Activated CD4-positive, alpha-beta T cell treated with anti-CD3 and anti-CD28 coated beads for 36 hours (primary cell): ENCODE measurements at regions of chr17 and their contacts with region 1.

Region 1: DNA sequence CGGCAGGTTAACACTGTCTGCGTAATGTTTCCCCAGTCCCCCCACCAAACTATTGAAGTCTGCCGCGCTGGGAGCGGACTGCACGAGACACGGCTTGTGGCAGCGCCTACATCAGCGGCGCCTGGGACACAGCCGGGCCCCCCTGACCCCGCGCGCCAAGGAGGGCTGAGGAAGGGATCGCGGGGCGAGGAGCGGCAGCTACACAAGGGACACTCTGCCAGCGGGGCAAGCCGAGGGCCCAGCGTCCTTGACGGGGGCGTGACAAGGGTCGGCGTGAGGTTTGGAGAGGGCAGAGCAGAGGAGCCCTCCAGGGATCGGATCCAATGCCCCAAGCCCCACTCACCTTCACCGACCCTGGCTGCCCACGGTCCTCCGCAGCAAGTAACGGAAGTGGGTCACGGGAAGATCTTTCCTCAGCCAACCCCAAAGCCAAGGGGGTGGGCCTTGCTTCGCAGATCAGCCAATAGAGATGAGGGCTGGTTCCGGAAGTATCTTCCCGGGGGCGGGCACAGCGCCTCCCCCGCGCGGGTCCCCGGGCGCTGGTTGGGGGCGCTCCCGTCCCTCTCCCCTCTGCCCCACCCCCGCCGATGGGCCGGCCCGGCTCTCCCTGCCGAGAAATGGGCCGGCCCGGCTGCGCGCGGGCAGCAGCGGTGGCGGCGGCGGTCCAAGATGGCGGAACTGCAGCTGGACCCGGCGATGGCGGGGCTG is at the starts of genes ATP5PD and KCTD2:
- DNase-seq: peak; percentile 97
- ATAC-seq: peak; percentile 95
- H3K4me3 Mint-ChIP-seq: peak within 1 kb of the TSS; percentile 99
- H3K27ac Mint-ChIP-seq: peak within 1 kb of the TSS; percentile 94
- H3K4me1 Mint-ChIP-seq: peaks cover 37% of the 10 kb centered on the region
- H3K27me3 Mint-ChIP-seq: no peaks in the 10 kb centered on the region
- total RNA-seq, gene ATP5PD: 194 to 237 TPM
- total RNA-seq, gene KCTD2: 15.3 to 16.7 TPM

Region 2: GRCh38 chr17:74513987-74514631 is 532.6 kb before region 1 on chr17:
- CTCF ChIA-PET with region 1: no interaction called
- POLR2A ChIA-PET with region 1: no interaction called
- intact Hi-C with region 1: no loop called
- DNase-seq: peak; percentile 78
- ATAC-seq: peak; percentile 17
- H3K4me3 Mint-ChIP-seq: peak overlapping the region; percentile 72
- H3K27ac Mint-ChIP-seq: peak overlapping the region; percentile 95
- H3K4me1 Mint-ChIP-seq: peaks cover 31% of the 10 kb centered on the region
- H3K27me3 Mint-ChIP-seq: peaks cover 14% of the 10 kb centered on the region

Region 3: DNA sequence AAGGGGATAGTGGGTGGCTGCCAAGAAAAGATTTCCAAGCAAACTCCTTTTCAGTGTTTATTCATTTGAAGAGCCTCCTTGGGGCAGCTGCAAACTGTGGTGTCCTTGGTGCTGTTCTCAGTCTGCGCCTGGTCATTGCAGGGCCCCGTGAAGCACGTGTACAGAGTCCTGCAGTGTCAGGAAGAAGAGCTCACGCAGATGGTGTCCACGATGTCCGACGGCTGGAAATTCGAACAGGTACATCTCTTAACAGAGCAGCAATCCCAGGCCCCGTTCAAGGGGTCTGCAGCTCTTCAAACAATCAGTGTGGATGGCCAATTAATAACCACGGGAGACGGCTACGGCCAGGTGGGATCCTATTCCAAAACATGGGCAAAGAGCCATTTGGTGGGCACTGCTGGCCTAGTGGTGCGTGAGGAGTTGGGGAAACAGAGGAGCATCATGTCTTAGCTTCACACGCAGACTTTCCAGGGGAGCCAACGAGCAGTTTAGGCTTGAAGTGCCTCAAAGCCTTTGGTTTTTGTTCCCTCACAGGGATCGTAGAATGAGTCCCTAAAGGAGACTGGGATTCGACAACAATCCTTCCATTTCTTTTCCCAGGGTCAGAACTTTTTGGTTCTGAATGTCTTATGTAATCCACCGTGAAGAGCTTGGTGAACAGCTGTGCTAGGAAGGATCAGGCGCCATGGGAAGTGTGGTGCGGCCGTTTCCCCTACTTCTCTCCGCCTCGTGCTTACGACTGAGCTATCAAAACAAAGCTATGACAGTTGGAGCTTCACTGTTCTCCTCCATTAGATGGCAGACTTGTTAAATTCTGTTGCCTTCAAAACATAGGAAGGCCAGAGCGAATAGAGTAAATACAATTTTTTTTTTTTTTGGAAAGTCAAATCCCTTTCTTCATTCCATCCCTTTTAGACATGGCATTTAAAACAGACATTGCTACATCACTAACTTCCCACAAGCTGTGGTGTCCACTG is 12.9 kb after region 1 on chr17:
- CTCF ChIA-PET with region 1: interaction called, 20 read pairs
- POLR2A ChIA-PET with region 1: interaction called, 3 read pairs
- intact Hi-C with region 1: no loop called
- DNase-seq: no peak
- ATAC-seq: peak; percentile 39
- H3K4me3 Mint-ChIP-seq: no peak overlapping the region
- H3K27ac Mint-ChIP-seq: no peak overlapping the region
- H3K4me1 Mint-ChIP-seq: peaks cover 18% of the 10 kb centered on the region
- H3K27me3 Mint-ChIP-seq: no peaks in the 10 kb centered on the region